Ascending aorta (tissue), 2 donors: ENCODE measurements at regions of chr3 and their contacts with region 1.

Region 1: GRCh38 chr3:69774029-69774428 is 34.8 kb downstream of the MITF start:
- DNase-seq: peak in 1 of 2 donors; percentile 85
- H3K4me3 ChIP-seq: no peak overlapping the region
- H3K27ac ChIP-seq: no peak overlapping the region
- H3K4me1 ChIP-seq: peaks cover 0 to 10% of the 10 kb centered on the region in 2 donors
- H3K27me3 ChIP-seq: no peaks in the 10 kb centered on the region
- CTCF ChIP-seq: no peak

Region 2: DNA sequence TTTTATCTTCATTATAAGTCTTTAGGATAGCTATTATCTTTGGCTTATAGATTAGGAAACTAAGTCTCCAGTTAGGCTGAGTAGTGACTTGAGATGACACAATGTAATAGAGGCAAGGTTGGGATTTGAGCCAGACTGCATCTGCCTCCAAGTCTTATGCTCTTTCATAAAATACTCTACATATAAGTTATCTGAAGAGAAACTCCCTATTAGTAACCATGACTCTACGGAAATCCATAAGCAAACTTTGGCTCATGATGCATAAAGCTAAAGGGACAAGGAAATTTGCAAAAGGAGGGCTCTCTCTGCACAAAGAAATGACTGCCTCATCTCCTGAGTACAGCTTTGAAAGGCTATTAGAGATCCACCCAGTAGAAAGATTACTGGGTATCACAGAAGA is 310.5 kb before region 1 on chr3:
- intact Hi-C with region 1: no loop called
- DNase-seq: no peak
- H3K4me3 ChIP-seq: no peak overlapping the region
- H3K27ac ChIP-seq: no peak overlapping the region
- H3K4me1 ChIP-seq: no peaks in the 10 kb centered on the region
- H3K27me3 ChIP-seq: no peaks in the 10 kb centered on the region
- CTCF ChIP-seq: no peak

Region 3: GRCh38 chr3:69753179-69753775 is 20.8 kb before region 1 on chr3:
- intact Hi-C with region 1: loop called (anchors 1 kb)
- DNase-seq: no peak
- H3K4me3 ChIP-seq: no peak overlapping the region
- H3K27ac ChIP-seq: no peak overlapping the region
- H3K4me1 ChIP-seq: peaks cover 0 to 14% of the 10 kb centered on the region in 2 donors
- H3K27me3 ChIP-seq: no peaks in the 10 kb centered on the region
- CTCF ChIP-seq: no peak